Ovary (tissue), 10 donors: ENCODE measurements at regions of chr14 and their contacts with region 1.

Region 1: GRCh38 chr14:93788543-93789227 is 400 bp upstream of the PRIMA1 start:
- DNase-seq: peak; percentile 47 to 68 (median 60)
- H3K4me3 ChIP-seq: peak overlapping the region; percentile 63
- H3K27ac ChIP-seq: peak overlapping the region; percentile 71 to 83
- H3K4me1 ChIP-seq: no peaks in the 10 kb centered on the region
- H3K27me3 ChIP-seq: no peaks in the 10 kb centered on the region
- CTCF ChIP-seq: peak in 2 of 3 donors; percentile 26 to 43
- EP300 ChIP-seq: no peak
- POLR2A ChIP-seq: no peak

Region 2: GRCh38 chr14:93396471-93396870 is 392.2 kb before region 1 on chr14:
- intact Hi-C with region 1: no loop called
- DNase-seq: no peak
- H3K4me3 ChIP-seq: no peak overlapping the region
- H3K27ac ChIP-seq: no peak overlapping the region
- H3K4me1 ChIP-seq: no peaks in the 10 kb centered on the region
- H3K27me3 ChIP-seq: no peaks in the 10 kb centered on the region
- CTCF ChIP-seq: no peak
- EP300 ChIP-seq: no peak
- POLR2A ChIP-seq: no peak

Region 3: DNA sequence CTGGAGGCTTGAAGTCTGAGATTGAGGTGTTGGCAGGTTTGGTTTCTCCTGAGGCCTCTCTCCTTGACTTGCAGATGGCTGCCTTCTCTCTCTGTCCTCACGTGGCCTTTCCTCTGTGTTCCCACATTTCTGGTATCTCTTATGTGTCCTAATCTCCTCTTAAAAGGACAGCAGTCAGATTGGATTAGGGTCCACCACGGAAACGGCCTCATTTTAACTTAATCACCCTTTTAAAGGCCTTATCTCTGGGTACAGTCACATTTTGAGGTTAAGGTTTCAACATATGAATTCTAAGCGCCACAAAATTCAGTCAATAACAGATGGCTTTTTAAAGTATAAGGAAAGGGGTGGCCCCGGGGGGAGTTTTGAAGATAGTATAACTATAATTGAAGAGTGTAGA is 324.4 kb before region 1 on chr14:
- intact Hi-C with region 1: no loop called
- DNase-seq: no peak
- H3K4me3 ChIP-seq: no peak overlapping the region
- H3K27ac ChIP-seq: no peak overlapping the region
- H3K4me1 ChIP-seq: no peaks in the 10 kb centered on the region
- H3K27me3 ChIP-seq: no peaks in the 10 kb centered on the region
- CTCF ChIP-seq: no peak
- EP300 ChIP-seq: no peak
- POLR2A ChIP-seq: no peak

Region 4: GRCh38 chr14:93582516-93582915 is 206.2 kb before region 1 on chr14:
- intact Hi-C with region 1: no loop called
- DNase-seq: no peak
- H3K4me3 ChIP-seq: no peak overlapping the region
- H3K27ac ChIP-seq: no peak overlapping the region
- H3K4me1 ChIP-seq: no peaks in the 10 kb centered on the region
- H3K27me3 ChIP-seq: no peaks in the 10 kb centered on the region
- CTCF ChIP-seq: no peak
- EP300 ChIP-seq: no peak
- POLR2A ChIP-seq: no peak

Region 5: DNA sequence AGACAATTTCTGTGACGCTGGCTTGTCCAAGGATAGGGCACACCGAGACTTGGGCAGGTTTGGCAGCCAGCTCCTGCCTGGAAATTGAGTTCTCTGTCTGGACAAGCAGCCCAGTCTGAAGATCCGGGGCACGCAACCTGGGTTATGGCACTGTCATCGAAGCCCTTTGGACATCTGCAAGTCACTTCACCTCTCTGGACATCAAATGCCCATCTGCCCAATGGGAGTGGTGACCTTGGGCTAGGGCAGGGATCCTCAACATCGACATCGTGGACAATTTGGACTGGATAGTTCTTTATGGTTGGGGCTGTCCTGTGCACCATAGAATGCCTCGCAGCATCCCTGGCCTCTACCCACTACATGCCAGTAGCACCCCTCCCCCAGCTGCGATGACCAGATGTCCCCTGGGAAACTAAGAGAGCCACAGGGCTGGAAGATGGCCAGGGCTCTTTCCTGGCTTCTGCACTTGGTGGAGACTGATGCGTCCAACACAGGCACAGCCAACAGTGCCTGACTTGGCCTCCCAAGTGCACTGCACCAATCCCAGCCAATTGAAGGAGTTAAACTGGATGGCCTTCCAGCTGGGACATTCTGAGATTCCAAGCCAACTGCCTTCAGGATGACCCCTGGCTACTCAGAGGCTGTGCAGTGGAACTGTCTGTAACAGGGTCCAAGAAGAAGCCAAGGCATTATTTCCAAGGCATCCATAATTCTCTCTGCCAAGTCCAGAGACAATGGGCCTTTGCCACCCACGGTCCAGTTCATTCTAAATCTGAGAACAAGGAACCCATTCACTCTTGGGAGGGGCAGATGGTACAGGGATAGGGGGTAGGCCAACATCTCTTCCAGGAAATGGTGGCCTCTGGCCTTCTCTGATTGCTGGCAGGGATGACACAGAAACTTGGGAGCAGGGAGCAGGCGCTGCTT is 35.8 kb before region 1 on chr14:
- intact Hi-C with region 1: loop called in 1 of 4 experiments (anchors 1 kb)
- DNase-seq: no peak
- H3K4me3 ChIP-seq: no peak overlapping the region
- H3K27ac ChIP-seq: no peak overlapping the region
- H3K4me1 ChIP-seq: no peaks in the 10 kb centered on the region
- H3K27me3 ChIP-seq: no peaks in the 10 kb centered on the region
- CTCF ChIP-seq: no peak
- EP300 ChIP-seq: no peak
- POLR2A ChIP-seq: no peak

Region 6: DNA sequence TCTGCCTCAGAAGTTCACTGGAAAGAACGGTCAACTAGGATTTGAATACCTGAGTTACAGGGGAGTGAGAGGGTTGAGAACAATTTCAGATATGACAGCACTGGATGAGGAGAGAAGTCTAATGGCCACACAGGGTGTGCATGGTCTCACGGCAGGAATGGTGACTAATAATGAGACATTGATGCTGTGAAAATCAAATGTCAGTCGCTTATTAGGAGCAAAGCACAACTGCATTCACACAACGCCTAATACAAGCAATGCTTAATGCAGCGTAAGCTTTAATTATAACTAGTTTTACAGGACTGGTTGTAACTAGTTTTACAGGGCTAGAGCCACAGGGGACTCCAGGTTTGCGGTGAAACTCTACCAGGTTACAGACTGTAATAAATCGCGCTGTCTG is 23.0 kb after region 1 on chr14:
- intact Hi-C with region 1: no loop called
- DNase-seq: no peak
- H3K4me3 ChIP-seq: no peak overlapping the region
- H3K27ac ChIP-seq: no peak overlapping the region
- H3K4me1 ChIP-seq: no peaks in the 10 kb centered on the region
- H3K27me3 ChIP-seq: no peaks in the 10 kb centered on the region
- CTCF ChIP-seq: no peak
- EP300 ChIP-seq: no peak
- POLR2A ChIP-seq: no peak

Region 7: DNA sequence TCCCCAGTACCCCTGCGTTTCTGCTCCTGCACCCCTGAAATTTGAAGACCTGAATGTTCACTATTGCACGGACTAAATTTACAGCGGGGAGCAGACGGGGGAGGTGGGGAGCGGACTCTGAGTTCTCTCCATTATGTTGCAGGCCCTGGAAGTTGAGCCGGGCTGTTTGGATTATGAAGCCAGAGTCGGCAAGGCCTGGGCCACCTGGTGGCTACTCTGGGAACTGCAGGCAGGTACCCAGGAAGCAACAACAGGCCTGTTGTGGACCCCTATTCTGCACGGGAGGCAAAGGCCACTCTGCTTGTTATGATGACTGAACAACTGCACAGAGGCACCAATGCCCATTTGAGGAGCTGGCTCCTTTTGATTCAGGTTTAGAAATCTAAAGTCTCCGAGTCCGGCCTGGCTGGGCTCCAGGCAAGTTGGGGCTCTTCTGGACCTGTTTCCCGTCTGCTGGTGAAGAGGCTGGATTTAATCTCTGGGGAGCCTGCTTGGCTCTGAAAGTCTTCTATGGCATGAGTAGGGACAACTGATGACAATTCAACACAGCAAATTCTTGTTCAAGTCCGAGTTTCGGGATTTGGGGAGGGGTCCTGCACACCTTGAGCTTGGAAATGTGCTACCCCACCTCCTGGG is 104.4 kb after region 1 on chr14:
- intact Hi-C with region 1: loop called in 1 of 4 experiments (anchors 10 kb)
- DNase-seq: peak; percentile 59 to 82 (median 78)
- H3K4me3 ChIP-seq: no peak overlapping the region
- H3K27ac ChIP-seq: no peak overlapping the region
- H3K4me1 ChIP-seq: peaks cover 3% of the 10 kb centered on the region
- H3K27me3 ChIP-seq: no peaks in the 10 kb centered on the region
- CTCF ChIP-seq: peak; percentile 67 to 91 (median 77)
- EP300 ChIP-seq: no peak
- POLR2A ChIP-seq: no peak